AG04450 (cell line): ENCODE measurements at regions of chr22 and their contacts with region 1.

Region 1: DNA sequence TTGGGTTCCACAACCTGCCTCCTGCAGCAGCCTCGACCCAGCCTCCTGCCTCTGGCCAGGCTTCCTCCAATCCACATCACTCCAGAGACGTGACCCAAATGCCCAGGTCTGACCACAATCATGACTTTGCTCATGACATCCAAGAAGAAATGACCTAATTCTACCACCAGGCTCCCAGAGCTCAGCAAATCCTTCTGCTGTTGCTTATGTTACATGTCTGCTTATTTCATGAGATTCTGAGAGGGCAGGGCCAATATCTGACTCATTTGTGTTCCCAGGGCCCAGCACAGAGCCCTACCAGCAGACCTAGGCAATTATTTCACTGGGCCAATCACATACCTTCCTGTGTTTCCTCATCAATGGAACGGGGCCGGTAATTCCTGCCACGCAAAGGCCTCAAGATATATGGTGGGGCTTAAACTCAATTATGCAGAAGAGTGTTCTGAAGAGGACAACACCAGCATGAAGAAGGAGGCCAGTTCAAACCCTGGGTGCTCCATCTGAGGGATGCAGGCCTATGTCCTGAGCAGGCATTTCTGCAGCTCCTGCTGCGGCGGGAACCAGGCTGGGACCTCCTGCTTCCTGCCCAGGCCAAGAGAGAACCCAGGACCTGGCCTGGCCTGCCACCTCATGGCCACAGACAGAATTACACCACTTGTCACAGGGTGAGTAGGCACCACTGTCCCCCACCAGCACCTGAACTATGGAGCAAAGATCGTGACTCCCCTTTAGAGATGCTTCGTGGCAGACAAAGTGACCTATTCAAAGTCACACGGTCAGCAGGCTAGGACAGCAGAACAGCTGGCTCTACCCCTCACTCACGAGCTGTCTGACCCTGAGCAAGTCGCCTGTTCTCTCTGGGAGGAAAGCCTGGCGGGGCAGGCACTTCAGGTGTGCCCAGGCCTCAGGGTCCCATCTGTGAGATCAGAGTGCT is 5.9 kb downstream of the CENPM start:
- DNase-seq: peak; percentile 64
- H3K4me3 ChIP-seq: no peak overlapping the region
- H3K27ac ChIP-seq: peak overlapping the region; percentile 88
- H3K27me3 ChIP-seq: no peaks in the 10 kb centered on the region
- CTCF ChIP-seq: peak; percentile 89

Region 2: GRCh38 chr22:41873391-41873790 is 67.7 kb before region 1 on chr22:
- CTCF ChIA-PET with region 1: no interaction called
- POLR2A ChIA-PET with region 1: no interaction called
- DNase-seq: no peak
- H3K4me3 ChIP-seq: no peak overlapping the region
- H3K27ac ChIP-seq: no peak overlapping the region
- H3K27me3 ChIP-seq: no peaks in the 10 kb centered on the region
- CTCF ChIP-seq: no peak

Region 3: DNA sequence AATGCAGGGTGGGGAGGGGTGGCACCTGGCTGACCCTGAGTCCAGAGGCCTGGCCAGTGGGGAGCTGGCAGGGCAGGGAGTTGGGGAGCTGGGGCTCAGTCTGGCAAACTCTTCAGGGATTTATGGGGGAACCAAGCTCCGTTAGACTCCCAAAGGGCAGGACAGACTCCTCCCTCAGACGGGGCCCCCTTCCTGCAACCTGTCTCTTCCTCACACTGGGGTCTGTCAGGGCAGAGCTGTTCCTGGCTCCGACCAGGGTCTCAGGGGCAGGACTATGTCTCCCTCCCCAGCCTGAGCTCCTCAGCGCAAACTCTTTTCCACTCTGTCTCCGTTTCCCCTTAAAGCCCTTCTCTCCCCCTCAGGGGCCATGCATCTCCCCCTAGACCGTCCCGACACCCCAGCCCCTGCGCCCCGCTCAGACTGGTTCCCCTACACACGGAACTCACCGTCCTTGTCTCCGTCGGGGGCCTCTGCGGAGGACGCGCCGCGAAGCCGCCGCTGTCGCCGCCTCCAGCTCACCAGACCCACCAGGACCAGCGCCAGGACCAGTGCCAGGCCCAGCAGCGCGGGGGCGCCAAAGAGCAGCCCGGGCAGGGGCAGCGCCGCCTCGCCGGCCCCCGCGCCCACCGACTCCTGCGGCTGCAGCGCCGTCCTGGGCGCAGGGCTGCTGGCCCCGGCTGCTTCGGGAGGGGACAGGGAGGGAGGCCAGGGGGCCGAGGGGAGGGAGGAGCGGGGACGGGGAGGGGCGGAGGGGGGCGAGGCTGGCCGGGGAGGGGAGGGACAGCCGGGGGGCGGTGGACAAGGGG is 15.2 kb before region 1 on chr22:
- CTCF ChIA-PET with region 1: interaction called, 21 read pairs
- POLR2A ChIA-PET with region 1: interaction called, 3 read pairs
- DNase-seq: no peak
- H3K4me3 ChIP-seq: peak overlapping the region; percentile 38
- H3K27ac ChIP-seq: no peak overlapping the region
- H3K27me3 ChIP-seq: peaks cover 12% of the 10 kb centered on the region
- CTCF ChIP-seq: peak; percentile 57

Region 4: GRCh38 chr22:42052765-42053164 is 111.7 kb after region 1 on chr22:
- CTCF ChIA-PET with region 1: no interaction called
- POLR2A ChIA-PET with region 1: no interaction called
- DNase-seq: no peak
- H3K4me3 ChIP-seq: no peak overlapping the region
- H3K27ac ChIP-seq: no peak overlapping the region
- H3K27me3 ChIP-seq: no peaks in the 10 kb centered on the region
- CTCF ChIP-seq: no peak